B cell (primary cell): ENCODE measurements at regions of chr7 and their contacts with region 1.

Region 1: DNA sequence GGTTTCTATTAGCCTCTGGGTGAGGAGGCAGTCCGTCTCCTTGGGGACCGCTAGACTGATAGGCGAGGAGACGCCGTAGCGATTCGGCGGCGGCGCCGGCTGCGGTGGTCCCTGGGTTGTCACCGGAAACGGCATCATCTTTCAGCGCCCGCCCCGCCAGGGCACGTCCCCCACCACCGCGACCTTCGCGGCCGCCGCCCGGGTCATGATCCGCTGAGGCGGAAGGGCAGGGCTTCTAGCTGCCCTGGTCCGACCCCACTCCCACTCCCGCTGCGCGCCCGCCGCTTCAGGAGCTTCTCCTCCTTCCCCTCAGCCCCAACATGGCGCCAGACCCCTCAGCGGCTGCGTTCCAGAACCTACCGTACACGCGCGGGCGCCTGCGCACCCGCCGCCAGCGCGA is at the start of gene PAPOLB:
- DNase-seq: no peak
- ATAC-seq: peak; percentile 58
- H3K4me3 ChIP-seq: peak within 1 kb of the TSS; percentile 21 to 54 (median 43)
- H3K4me3 Mint-ChIP-seq: peak within 1 kb of the TSS; percentile 70
- H3K27ac ChIP-seq: peak within 1 kb of the TSS; percentile 25 to 50
- H3K27ac Mint-ChIP-seq: peak within 1 kb of the TSS; percentile 66
- H3K4me1 ChIP-seq: peaks cover 9 to 11% of the 10 kb centered on the region in 2 donors
- H3K4me1 Mint-ChIP-seq: peaks cover 4% of the 10 kb centered on the region
- H3K27me3 ChIP-seq: peaks cover 0 to 15% (median 8%) of the 10 kb centered on the region in 4 experiments
- H3K27me3 Mint-ChIP-seq: peaks cover 50% of the 10 kb centered on the region
- CTCF ChIP-seq: no peak
- total RNA-seq, gene PAPOLB: 0.07 TPM in 1 of 2 replicates, not detected in the other

Region 2: DNA sequence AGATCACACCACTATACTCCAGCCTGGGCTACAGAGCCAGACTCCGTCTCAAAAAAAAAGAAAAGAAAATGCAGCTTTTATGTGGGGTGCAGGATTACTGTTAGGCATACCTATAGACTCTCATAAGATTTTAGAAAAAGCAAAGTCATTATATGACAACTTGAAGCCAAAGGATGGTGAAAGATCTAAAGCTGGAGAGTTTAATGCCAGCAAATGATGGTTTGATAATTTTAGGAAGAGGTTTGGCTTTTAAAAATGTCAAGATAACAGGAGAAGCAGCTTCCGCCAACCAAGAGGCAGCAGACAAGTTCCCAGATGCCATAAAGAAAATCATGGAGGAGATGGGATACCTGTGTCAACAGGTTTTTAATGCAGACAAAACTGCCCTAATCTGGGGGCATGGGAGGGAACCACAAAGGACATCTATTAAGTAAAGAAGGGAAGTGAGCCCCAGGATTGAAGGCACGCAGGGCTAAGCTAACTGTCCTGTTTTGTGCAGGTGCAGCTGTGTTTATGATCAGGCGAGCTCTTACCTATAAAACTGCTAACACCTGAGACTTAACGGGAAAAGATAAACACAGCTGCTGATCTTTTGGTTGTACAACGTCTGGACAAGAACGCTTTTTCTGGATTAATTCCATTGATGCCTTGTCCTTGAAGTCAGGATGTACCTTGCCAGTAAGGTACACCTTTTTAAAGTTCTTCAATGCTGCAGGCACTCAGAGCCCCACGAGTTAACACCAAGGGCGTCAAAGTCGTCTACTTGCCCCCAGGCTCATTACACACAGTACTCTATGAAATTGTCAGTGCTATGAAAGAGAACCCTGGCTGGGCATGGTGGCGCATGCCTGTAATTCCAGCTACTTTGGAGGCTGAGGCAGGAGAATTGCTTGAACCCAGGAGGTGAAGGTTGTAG is 1159.0 kb after region 1 on chr7:
- CTCF ChIA-PET with region 1: no interaction called
- POLR2A ChIA-PET with region 1: interaction called, 13 read pairs
- intact Hi-C with region 1: no loop called
- DNase-seq: no peak
- ATAC-seq: no peak
- H3K4me3 ChIP-seq: no peak overlapping the region
- H3K4me3 Mint-ChIP-seq: no peak overlapping the region
- H3K27ac ChIP-seq: no peak overlapping the region
- H3K27ac Mint-ChIP-seq: no peak overlapping the region
- H3K4me1 ChIP-seq: peaks cover 0 to 1% of the 10 kb centered on the region in 2 donors
- H3K4me1 Mint-ChIP-seq: peaks cover 5% of the 10 kb centered on the region
- H3K27me3 ChIP-seq: no peaks in the 10 kb centered on the region
- H3K27me3 Mint-ChIP-seq: no peaks in the 10 kb centered on the region
- CTCF ChIP-seq: no peak